ENCODE measurements at regions of chr20 and their contacts with region 1.

Region 1: GRCh38 chr20:49384437-49385088 is 97.9 kb downstream of the KCNB1 start:
- DNase-seq: peak; percentile 86
- H3K4me3 ChIP-seq: no peak overlapping the region
- H3K27ac ChIP-seq: no peak overlapping the region
- H3K4me1 ChIP-seq: peaks cover 11% of the 10 kb centered on the region
- H3K27me3 ChIP-seq: no peaks in the 10 kb centered on the region
- CTCF ChIP-seq: peak; percentile 57 to 86 (median 74)
- POLR2A ChIP-seq: no peak

Region 2: DNA sequence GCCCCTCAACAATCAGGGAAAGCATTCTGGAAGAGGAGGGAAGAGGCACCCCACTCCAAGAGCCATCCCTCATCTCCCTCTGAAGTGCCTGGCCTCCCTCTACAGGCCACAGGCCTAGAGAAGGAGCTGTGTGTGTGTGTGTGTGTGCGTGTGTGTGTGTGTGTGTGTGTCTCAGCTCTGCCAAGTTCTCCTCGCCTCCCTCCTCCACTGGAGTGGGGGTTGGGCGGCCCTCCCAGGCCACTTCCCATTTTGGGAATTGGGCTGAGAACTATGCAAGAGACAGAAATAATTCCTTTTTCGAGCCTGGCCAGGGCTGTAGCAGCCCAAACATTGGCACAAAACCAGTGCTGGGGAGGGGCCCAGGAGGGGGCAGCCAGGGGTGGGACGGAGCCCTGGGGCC is 62.2 kb after region 1 on chr20:
- intact Hi-C with region 1: loop called (anchors 10 kb)
- DNase-seq: peak; percentile 85
- H3K4me3 ChIP-seq: no peak overlapping the region
- H3K27ac ChIP-seq: peak overlapping the region; percentile 72 to 80
- H3K4me1 ChIP-seq: peaks cover 38% of the 10 kb centered on the region
- H3K27me3 ChIP-seq: no peaks in the 10 kb centered on the region
- CTCF ChIP-seq: peak in 2 of 3 experiments; percentile 11 to 23
- POLR2A ChIP-seq: no peak

Region 3: DNA sequence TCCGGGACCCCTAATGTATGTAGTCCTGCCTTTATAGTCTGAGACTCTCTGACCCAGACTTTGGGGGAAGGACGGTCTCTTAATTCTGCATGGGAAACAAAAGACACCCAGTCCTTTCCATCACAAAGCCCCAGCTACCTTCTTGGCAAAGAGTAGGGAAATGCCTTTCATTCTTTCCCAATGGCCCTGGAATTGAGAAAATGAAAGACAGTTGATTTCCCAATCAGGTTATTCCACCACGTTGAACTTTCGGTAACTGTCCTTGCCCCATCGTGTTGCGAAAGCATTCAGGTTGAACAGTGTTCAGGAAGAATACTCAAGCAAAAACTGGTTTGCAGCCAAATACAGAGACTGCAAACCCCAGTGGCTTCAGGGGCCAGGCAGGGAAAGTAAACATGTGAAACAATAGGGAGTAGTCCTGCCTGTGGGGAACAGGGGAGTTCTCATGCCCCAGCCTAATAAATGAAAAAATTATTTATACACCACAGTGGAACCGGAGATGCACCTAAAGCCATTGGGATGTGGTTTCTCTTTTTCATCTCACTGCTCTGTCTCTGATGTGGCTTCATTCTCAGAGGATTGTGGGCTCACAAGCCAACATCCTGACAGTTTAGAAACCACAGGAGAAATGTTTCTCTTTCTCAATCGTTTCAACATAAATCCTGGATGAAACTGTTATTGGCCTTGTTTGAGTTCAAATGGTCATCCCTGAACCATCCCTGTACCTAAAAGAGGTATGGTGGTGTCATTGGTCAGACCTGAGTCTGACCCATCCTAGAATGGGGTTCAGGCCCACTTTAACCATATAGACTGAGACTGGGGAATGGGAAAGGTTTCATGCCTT is 383.9 kb after region 1 on chr20:
- intact Hi-C with region 1: no loop called
- DNase-seq: peak; percentile 45
- H3K4me3 ChIP-seq: no peak overlapping the region
- H3K27ac ChIP-seq: peak overlapping the region in 1 of 2 donors; percentile 36
- H3K4me1 ChIP-seq: peaks cover 6% of the 10 kb centered on the region
- H3K27me3 ChIP-seq: no peaks in the 10 kb centered on the region
- CTCF ChIP-seq: no peak
- POLR2A ChIP-seq: no peak